ENCODE measurements at regions of chr10 and their contacts with region 1.

Region 1: GRCh38 chr10:59830601-59831259 is 75.6 kb downstream of the CCDC6 start:
- DNase-seq: peak; percentile 26
- H3K4me3 Mint-ChIP-seq: no peak overlapping the region
- H3K27ac Mint-ChIP-seq: no peak overlapping the region
- H3K4me1 Mint-ChIP-seq: peaks cover 37% of the 10 kb centered on the region
- H3K27me3 Mint-ChIP-seq: no peaks in the 10 kb centered on the region

Region 2: GRCh38 chr10:59625721-59626522 is 204.8 kb before region 1 on chr10:
- CTCF ChIA-PET with region 1: interaction called, 17 read pairs
- POLR2A ChIA-PET with region 1: no interaction called
- DNase-seq: peak; percentile 49
- H3K4me3 Mint-ChIP-seq: no peak overlapping the region
- H3K27ac Mint-ChIP-seq: no peak overlapping the region
- H3K4me1 Mint-ChIP-seq: peaks cover 3% of the 10 kb centered on the region
- H3K27me3 Mint-ChIP-seq: peaks cover 20% of the 10 kb centered on the region

Region 3: GRCh38 chr10:59719374-59719773 is 111.4 kb before region 1 on chr10:
- CTCF ChIA-PET with region 1: no interaction called
- POLR2A ChIA-PET with region 1: no interaction called
- DNase-seq: no peak
- H3K4me3 Mint-ChIP-seq: no peak overlapping the region
- H3K27ac Mint-ChIP-seq: no peak overlapping the region
- H3K4me1 Mint-ChIP-seq: no peaks in the 10 kb centered on the region
- H3K27me3 Mint-ChIP-seq: peaks cover 31% of the 10 kb centered on the region

Region 4: DNA sequence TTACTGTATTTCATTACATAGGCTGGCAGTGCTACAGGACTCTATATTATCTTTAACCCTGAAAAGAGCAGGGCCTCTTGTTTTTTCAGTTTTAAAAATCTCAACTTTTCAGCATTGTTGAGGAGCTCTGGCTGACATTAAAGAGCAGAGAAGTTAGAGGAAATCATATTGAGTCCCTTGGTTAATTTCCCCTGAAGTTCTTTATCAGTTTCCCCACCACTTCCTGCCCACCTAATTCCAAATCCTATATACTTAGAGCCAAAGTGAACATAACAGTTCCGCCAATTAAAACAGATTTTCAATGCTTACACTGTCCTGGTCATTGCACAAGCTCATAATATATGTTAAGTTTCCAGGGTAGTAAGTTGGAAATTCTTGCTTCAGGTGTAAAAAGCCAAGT is 11.5 kb before region 1 on chr10:
- CTCF ChIA-PET with region 1: interaction called, 11 read pairs
- POLR2A ChIA-PET with region 1: no interaction called
- DNase-seq: no peak
- H3K4me3 Mint-ChIP-seq: no peak overlapping the region
- H3K27ac Mint-ChIP-seq: no peak overlapping the region
- H3K4me1 Mint-ChIP-seq: peaks cover 19% of the 10 kb centered on the region
- H3K27me3 Mint-ChIP-seq: no peaks in the 10 kb centered on the region

Region 5: GRCh38 chr10:59844436-59844835 is 13.7 kb after region 1 on chr10:
- CTCF ChIA-PET with region 1: interaction called, 12 read pairs
- POLR2A ChIA-PET with region 1: no interaction called
- DNase-seq: no peak
- H3K4me3 Mint-ChIP-seq: no peak overlapping the region
- H3K27ac Mint-ChIP-seq: no peak overlapping the region
- H3K4me1 Mint-ChIP-seq: peaks cover 13% of the 10 kb centered on the region
- H3K27me3 Mint-ChIP-seq: no peaks in the 10 kb centered on the region